BJ (cell line): ENCODE measurements at regions of chr2 and their contacts with region 1.

Region 1: GRCh38 chr2:200862532-200863000 is 1.9 kb downstream of the CLK1 start:
- DNase-seq: no peak
- H3K4me3 ChIP-seq: peak overlapping the region; percentile 86
- H3K27me3 ChIP-seq: no peaks in the 10 kb centered on the region
- CTCF ChIP-seq: no peak

Region 2: DNA sequence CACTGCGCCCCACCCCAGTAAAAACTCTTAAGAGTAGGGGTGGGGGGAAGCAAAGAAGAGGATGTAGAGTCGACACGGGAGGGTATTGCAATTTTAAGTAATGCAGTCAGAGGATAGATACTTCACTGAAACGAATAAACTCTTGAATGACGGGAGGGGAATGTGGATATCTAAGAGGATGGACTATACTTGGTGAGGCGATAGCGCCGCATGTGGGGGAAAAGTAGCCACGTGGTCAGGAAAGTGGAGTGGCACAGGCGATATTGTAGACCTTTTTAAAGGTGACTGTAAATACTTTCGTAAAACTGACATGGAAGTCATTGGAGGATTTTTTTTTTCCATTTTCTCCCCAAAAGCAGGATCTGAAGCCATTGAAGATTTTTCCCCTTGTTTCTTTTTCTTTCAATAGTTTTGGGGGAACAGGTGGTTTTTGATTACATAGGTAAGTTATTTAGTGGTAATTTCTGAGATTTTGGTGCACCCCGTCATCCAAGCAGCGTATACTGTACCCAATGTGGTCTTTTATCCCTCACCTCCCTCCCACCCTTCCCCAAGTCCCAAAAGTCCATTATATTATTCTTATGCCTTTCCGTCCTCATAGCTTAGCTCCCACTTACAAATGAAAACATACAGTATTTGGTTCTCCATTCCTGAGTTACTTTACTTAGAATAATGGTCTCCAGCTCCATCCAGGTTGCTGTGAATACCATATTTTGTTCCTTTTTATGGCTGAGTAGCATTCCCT is 11.9 kb before region 1 on chr2:
- CTCF ChIA-PET with region 1: interaction called, 3 read pairs
- POLR2A ChIA-PET with region 1: interaction called, 10 read pairs
- DNase-seq: no peak
- H3K4me3 ChIP-seq: no peak overlapping the region
- H3K27me3 ChIP-seq: no peaks in the 10 kb centered on the region
- CTCF ChIP-seq: no peak

Region 3: GRCh38 chr2:200939832-200940231 is 77.3 kb after region 1 on chr2:
- CTCF ChIA-PET with region 1: no interaction called
- POLR2A ChIA-PET with region 1: no interaction called
- DNase-seq: no peak
- H3K4me3 ChIP-seq: no peak overlapping the region
- H3K27me3 ChIP-seq: no peaks in the 10 kb centered on the region
- CTCF ChIP-seq: no peak

Region 4: GRCh38 chr2:200985799-200986198 is 123.2 kb after region 1 on chr2:
- CTCF ChIA-PET with region 1: no interaction called
- POLR2A ChIA-PET with region 1: no interaction called
- DNase-seq: no peak
- H3K4me3 ChIP-seq: no peak overlapping the region
- H3K27me3 ChIP-seq: no peaks in the 10 kb centered on the region
- CTCF ChIP-seq: no peak